ENCODE measurements at regions of chr6 and their contacts with region 1.

Region 1: GRCh38 chr6:105992315-105992961 is 93.7 kb upstream of the PRDM1 start:
- DNase-seq: peak in 9 of 10 donors; percentile 36 to 87 (median 59)
- H3K4me3 ChIP-seq: peak overlapping the region; percentile 18 to 75 (median 63)
- H3K27ac ChIP-seq: peak overlapping the region in 27 of 59 donors; percentile 0 to 87 (median 37)
- H3K27me3 ChIP-seq: peaks cover 0 to 100% (median 93%) of the 10 kb centered on the region in 45 donors
- CTCF ChIP-seq: peak in 5 of 56 donors; percentile 10 to 18 (median 11)

Region 2: DNA sequence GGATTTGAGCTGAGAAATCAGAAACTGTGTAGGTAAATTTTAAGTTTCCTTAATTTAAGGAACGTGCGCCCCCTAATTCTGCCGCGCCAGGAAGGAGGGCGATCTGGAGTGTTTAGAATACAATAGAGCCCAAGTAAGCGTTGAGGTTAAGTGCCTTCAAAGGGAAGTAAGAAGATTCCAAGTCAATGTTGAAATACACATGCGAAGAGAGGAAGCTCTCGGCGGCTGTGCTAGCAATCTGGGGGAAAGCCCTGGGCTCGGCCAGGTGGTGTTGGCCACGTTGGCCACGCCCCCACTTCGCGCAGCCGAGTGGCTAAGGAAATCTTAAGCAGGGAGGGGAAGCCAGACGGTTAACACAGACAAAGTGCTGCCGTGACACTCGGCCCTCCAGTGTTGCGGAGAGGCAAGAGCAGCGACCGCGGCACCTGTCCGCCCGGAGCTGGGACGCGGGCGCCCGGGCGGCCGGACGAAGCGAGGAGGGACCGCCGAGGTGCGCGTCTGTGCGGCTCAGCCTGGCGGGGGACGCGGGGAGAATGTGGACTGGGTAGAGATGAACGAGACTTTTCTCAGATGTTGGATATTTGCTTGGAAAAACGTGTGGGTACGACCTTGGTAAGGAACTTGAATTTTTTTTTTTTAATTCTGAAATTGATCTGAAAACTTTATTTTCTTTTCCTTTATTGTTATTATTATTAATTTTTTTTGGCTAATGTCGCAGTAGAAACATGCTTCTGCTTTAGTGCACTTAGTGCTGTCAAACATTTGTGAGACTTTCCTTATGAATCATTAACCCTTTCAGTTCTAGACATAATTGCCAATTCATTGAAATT is 93.8 kb after region 1 on chr6 and contains the start of gene PRDM1:
- intact Hi-C with region 1: loop called (anchors 10 kb)
- DNase-seq: peak in 9 of 10 donors; percentile 43 to 90 (median 55)
- H3K4me3 ChIP-seq: peak within 1 kb of the TSS in 58 of 59 donors; percentile 20 to 68 (median 52)
- H3K27ac ChIP-seq: peak within 1 kb of the TSS in 49 of 59 donors; percentile 11 to 79 (median 57)
- H3K27me3 ChIP-seq: peaks cover 0 to 95% (median 57%) of the 10 kb centered on the region in 45 donors
- CTCF ChIP-seq: peak in 2 of 56 donors; percentile 7 to 18
- total RNA-seq, gene PRDM1: 1.9 to 9.7 (median 4.6) TPM